Cardiac septum (tissue), 1 donor: ENCODE measurements at regions of chr12 and their contacts with region 1.

Region 1: DNA sequence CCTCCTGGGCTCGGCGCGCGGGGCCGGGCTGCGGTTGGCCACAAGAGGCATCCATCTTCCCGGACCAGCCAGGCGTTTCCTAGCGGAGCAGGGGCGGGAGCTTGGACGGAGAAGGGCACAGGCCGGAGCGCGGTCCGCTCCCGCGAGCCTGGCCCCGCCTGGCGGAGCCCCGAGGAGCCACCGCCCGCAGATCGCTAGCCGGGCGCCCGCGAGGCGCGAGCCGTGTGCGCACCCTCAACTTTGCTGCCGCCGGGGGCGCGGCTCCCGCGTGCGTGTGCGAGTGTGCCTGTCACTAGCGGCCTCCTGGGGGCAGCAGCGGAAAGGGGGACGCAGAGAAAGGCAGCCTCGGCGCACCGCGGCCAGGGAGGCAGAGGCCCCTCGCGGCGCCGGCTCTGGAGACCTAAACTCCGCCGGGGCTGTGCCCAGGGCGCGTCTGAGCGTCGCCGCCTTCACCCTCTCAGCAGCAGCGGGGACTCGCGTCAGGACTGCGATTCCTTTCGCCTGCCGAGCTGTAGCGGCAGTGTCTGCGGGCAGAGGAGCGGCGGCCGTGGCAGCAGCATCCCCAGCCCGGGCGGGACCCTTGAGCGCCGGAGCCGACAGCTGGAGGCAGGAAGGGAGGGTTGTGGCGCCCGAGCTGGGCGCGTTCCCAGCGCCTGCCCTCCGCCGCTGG is 644 bp upstream of the SRGAP1 start:
- DNase-seq: peak; percentile 92

Region 2: DNA sequence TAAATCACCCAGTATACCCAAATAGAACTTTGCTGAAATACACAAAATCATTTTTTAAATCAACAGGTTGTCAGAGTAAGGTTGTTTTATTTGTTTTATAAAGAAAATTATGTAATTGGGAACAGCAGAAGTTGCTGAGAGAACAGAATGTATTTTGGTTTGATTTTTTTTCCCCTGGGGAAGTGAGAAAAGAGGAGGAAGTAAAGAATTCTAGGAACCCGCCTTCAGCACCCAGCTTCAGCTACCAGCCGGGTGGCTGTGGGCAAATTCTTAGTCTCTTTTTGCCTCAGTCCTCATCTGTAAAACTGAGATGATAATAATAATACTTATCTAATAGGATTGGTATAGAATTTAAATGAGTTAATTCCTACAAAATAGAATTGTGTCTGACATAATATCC is 120.0 kb after region 1 on chr12:
- intact Hi-C with region 1: no loop called
- DNase-seq: no peak

Region 3: DNA sequence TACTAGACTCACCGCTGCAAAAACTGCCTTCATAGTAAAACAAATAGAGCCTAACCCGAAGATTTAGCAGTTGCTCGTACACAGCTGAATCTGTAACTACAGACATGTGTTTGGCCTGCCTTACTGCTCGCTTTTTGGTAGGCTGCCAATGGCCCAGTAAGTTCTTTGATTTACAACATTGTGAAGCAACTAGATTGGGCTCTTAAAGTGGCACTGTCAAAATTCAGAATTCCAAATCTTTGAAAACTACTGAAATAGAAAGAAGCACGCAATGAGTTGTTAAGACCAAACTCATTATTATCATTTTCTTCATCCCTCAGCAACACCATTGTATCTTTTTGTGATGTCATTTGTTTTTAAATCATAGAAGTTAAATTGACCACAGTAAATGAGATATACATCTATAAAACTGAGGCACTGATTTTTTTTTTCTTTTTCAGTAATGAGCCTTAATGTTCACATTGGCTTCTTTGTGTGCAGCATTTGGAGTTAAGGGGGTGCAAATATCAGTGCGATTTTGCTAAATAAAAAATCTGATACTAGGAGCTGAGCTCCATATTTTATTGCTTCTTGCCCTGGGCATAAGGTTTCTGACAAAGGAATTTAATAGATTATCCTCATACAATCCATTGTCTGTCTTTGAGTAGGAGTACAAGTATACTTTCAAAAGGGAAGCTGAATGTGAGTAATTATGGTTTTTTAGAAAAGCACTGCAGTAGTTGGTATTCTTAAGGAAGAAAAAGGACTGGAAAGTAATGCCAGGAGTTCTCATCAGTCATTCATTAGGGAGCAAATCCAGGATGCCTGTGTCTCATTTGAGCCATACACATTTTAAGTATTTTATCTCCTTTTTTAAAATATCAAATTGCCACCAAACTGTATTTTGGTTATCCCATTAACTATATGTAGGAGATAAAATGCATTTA is 239.7 kb after region 1 on chr12:
- intact Hi-C with region 1: loop called (anchors 5 kb)
- DNase-seq: no peak

Region 4: GRCh38 chr12:64099397-64099796 is 255.5 kb after region 1 on chr12:
- intact Hi-C with region 1: no loop called
- DNase-seq: no peak

Region 5: GRCh38 chr12:64181504-64182291 is 337.8 kb after region 1 on chr12:
- intact Hi-C with region 1: loop called (anchors 1 kb)
- DNase-seq: no peak

Region 6: GRCh38 chr12:64256166-64256800 is 412.4 kb after region 1 on chr12:
- intact Hi-C with region 1: loop called (anchors 1 kb)
- DNase-seq: no peak